ENCODE measurements at regions of chr4 and their contacts with region 1.

Region 1: DNA sequence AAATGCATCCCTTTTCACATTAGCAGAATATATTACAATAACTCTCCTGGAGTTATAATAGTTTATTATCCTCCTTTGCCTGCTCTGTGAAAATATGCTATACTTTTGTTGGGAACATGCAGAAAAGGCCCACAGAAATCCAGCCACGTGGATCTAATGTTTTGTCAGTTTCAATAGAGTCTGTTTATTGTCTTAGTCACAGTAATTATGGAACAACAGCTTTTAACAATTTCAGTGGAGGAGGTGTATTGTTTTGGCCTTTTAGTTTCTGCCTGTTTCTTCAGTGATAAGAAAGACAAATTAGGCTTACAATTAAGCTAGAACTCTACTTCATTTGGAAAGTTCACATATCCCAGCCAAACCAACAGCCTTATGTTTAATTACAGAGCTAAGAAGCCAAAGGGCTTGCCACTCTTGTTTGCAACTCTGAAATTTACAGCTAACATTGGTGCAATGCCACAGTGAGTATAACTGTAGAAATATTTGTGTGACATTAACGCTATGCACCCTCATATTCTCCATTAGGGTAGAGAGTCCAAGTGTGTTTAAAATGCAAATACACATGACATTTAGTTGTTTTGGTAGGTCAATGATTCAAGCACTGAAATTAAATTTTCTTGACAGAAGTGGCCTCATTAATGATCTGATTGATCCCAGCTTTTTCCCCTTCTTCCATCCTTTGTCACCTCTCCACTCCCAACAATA is 175.8 kb downstream of the USP46 start:
- DNase-seq: no peak
- ATAC-seq: no peak
- H3K4me3 ChIP-seq: no peak overlapping the region
- H3K27ac ChIP-seq: no peak overlapping the region
- H3K4me1 ChIP-seq: peaks cover 0 to 5% (median 0%) of the 10 kb centered on the region in 12 donors
- H3K27me3 ChIP-seq: no peaks in the 10 kb centered on the region
- CTCF ChIP-seq: no peak
- POLR2A ChIP-seq: no peak

Region 2: DNA sequence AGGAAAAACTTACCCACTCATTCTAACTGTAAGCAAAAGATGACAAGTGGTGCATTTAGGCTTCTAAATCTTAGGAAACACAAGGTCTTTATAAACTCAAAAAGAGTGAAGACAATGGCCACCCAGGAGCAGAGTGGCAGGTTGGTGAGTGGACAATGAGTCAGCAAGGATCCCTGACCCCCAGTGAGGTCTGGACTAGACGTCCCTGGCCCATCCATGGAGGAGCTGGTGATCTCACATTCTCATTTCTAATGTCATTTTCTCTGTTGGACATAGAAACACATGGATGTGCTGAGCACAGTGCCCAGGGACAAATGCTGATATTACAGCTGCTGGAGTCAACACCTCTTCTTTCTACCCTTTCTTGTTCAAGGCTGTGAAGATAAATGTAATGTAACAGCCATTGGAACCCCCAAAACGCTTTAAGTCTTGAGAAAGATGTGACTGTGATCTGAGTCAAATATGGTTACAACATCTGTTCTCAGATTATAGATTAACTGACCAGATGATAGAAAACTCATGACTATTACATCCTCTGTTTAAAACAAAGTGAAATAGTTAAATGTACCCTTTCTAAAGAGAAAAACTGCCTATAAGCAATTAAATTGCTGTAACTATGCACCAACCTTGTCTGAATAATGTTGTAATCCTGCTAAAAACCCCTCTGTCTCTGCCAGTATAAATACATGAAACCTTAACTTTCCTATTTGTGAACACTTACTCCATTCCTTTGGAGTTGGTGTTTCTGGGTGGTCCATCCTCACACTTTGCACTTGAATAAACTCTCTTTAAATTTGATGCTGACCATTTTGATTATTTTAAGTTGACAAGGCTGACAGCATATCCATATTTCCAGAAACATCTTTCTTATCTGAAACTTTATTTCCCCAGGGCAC is 83.0 kb after region 1 on chr4:
- intact Hi-C with region 1: loop called in 1 of 10 experiments (anchors 2 kb)
- DNase-seq: no peak
- ATAC-seq: no peak
- H3K4me3 ChIP-seq: no peak overlapping the region
- H3K27ac ChIP-seq: no peak overlapping the region
- H3K4me1 ChIP-seq: peaks cover 0 to 8% (median 0%) of the 10 kb centered on the region in 12 donors
- H3K27me3 ChIP-seq: no peaks in the 10 kb centered on the region
- CTCF ChIP-seq: no peak
- POLR2A ChIP-seq: no peak

Measured in heart left ventricle (tissue), 16 donors.